Dorsolateral prefrontal cortex (tissue), 120 donors: ENCODE measurements at regions of chr19 and their contacts with region 1.

Region 1: GRCh38 chr19:48210005-48210404 is 39.5 kb downstream of the ZSWIM9 start:
- DNase-seq: no peak
- H3K4me3 ChIP-seq: no peak overlapping the region
- H3K27ac ChIP-seq: no peak overlapping the region
- H3K27me3 ChIP-seq: no peaks in the 10 kb centered on the region
- CTCF ChIP-seq: no peak

Region 2: GRCh38 chr19:48158210-48158790 is 51.7 kb before region 1 on chr19:
- intact Hi-C with region 1: no loop called
- DNase-seq: no peak
- H3K4me3 ChIP-seq: no peak overlapping the region
- H3K27ac ChIP-seq: no peak overlapping the region
- H3K27me3 ChIP-seq: no peaks in the 10 kb centered on the region
- CTCF ChIP-seq: no peak

Region 3: DNA sequence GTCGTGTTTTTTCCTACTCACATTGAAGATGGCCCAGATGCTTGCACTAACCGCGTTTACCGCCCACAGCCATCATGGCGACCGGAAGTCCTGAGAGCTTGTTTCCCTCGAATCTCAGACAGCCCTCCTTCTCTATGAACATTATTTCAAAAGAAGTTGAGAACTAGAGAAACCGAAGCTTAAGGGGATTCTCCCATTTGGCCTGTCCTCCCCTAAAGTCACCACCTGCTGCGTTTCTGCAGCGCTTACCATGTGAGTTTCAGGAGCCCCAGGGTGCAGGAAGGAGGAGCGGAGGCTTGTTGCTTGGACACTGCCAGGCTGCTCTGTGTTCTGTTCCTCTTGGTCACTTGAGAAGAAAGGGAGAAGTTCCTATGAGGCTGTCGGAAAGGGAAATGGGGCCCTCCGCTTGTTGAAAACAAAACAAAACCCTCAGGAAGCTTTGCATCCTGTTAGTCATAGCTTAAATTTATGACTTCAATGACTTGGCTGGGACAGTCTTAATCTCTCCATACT is 39.6 kb after region 1 on chr19:
- intact Hi-C with region 1: loop called in 1 of 2 experiments (anchors 5 kb)
- DNase-seq: peak in 1 of 10 donors; percentile 21
- H3K4me3 ChIP-seq: peak overlapping the region in 37 of 59 donors; percentile 5 to 52 (median 31)
- H3K27ac ChIP-seq: peak overlapping the region in 16 of 59 donors; percentile 4 to 70 (median 48)
- H3K27me3 ChIP-seq: no peaks in the 10 kb centered on the region
- CTCF ChIP-seq: no peak

Region 4: DNA sequence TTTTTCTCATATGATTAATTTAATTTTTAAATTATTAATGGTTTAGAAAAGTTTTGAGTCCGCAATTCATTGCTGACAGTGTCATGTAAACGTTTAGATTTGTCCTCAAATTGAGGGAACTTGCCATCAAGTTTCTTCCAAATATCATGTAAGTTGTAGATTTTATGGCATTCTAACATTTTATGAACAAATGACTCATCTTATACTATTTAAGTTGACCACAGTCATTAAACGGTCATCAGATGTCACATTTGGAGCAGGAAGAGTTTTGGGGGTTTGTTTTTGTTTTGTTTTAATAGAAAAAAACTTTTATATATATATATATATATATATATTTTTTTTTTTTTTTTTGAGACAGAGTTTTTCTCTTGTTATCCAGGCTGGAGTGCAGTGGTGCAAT is 64.2 kb after region 1 on chr19:
- intact Hi-C with region 1: no loop called
- DNase-seq: no peak
- H3K4me3 ChIP-seq: no peak overlapping the region
- H3K27ac ChIP-seq: no peak overlapping the region
- H3K27me3 ChIP-seq: peaks cover 0 to 5% (median 0%) of the 10 kb centered on the region in 45 donors
- CTCF ChIP-seq: no peak

Region 5: DNA sequence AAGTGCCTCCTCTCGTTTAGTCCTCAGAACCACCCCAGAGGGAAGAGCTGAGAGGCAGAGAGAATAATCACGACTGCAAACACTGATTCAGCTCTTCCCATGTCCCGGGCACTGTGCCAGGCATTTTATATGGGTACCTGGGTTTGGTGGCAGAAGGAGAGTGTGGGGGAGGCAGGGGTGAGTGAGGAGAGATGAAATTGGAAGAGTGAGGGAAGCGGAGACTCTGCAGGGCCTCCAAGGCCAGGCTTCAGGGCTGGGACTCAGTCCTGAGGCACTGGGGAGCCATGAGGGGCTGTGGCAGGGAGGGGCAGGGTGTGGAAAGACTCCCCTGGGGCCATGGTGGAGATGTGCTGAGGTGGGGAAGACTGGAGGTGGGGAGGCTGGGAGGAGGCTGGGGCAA is 162.9 kb after region 1 on chr19:
- intact Hi-C with region 1: no loop called
- DNase-seq: peak in 6 of 10 donors; percentile 47 to 74 (median 58)
- H3K4me3 ChIP-seq: no peak overlapping the region
- H3K27ac ChIP-seq: peak overlapping the region in 1 of 59 donors; percentile 37
- H3K27me3 ChIP-seq: no peaks in the 10 kb centered on the region
- CTCF ChIP-seq: no peak